Adrenal gland (tissue), 19 donors: ENCODE measurements at regions of chr10 and their contacts with region 1.

Region 1: DNA sequence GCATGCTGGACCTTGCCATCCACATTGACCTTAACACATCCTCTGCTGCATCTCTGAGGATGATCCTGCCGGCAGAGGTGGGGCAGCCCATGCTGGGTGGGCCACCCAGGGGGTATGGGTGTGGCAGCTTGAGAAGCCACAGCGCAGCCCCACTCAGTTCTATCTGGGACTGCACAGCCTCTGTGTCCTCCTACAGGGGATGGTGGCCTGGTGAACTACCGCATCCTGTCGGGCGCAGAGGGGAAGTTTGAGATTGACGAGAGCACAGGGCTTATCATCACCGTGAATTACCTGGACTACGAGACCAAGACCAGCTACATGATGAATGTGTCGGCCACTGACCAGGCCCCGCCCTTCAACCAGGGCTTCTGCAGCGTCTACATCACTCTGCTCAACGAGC is 12.2 kb upstream of the C10orf105 start:
- DNase-seq: no peak
- H3K4me3 ChIP-seq: no peak overlapping the region
- H3K27ac ChIP-seq: no peak overlapping the region
- H3K4me1 ChIP-seq: peaks cover 26 to 28% of the 10 kb centered on the region in 2 donors
- H3K27me3 ChIP-seq: no peaks in the 10 kb centered on the region
- CTCF ChIP-seq: no peak
- POLR2A ChIP-seq: no peak

Region 2: GRCh38 chr10:71771821-71772617 is 40.2 kb after region 1 on chr10:
- intact Hi-C with region 1: loop called in 1 of 2 experiments (anchors 5 kb)
- DNase-seq: peak; percentile 67 to 93 (median 82)
- H3K4me3 ChIP-seq: peak overlapping the region in 2 of 4 donors; percentile 6 to 74
- H3K27ac ChIP-seq: peak overlapping the region in 4 of 5 donors; percentile 34 to 90 (median 72)
- H3K4me1 ChIP-seq: peaks cover 22 to 72% of the 10 kb centered on the region in 2 donors
- H3K27me3 ChIP-seq: no peaks in the 10 kb centered on the region
- CTCF ChIP-seq: no peak
- POLR2A ChIP-seq: peak; percentile 9 to 36

Region 3: DNA sequence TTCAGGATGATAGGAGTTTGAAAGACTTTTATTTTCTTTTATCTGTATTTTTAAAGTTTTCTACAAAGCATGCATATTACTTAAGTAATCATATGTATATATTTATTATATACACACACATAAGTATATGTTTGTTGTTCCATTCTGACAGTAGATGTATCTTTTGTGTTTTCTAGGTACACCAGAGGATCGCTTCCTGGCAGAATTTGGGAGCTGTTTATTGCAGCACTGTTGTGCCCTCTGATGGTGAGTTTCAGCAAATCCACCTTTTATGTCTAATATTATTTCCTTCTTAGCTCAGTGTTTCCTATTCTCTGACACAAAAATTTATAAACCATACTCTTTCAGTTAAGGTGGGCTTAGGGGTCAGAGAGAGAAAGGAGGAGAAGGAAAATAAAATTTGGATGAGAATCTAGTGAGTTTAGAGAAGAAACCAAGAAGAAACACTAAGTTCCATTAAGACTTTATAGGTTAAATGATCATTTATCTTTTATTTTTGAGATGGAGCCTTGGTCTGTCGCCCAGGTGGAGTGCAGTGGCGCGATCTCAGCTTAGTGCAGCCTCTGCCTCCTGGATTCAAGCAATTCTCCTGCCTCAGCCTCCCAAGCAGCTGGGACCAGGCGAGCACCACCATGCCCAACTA is 1102.5 kb after region 1 on chr10:
- intact Hi-C with region 1: no loop called
- DNase-seq: peak; percentile 36 to 74 (median 55)
- H3K4me3 ChIP-seq: no peak overlapping the region
- H3K27ac ChIP-seq: no peak overlapping the region
- H3K4me1 ChIP-seq: no peaks in the 10 kb centered on the region
- H3K27me3 ChIP-seq: no peaks in the 10 kb centered on the region
- CTCF ChIP-seq: peak; percentile 46 to 86 (median 76)
- POLR2A ChIP-seq: no peak